CD8-positive, alpha-beta T cell (primary cell): ENCODE measurements at regions of chr6 and their contacts with region 1.

Region 1: DNA sequence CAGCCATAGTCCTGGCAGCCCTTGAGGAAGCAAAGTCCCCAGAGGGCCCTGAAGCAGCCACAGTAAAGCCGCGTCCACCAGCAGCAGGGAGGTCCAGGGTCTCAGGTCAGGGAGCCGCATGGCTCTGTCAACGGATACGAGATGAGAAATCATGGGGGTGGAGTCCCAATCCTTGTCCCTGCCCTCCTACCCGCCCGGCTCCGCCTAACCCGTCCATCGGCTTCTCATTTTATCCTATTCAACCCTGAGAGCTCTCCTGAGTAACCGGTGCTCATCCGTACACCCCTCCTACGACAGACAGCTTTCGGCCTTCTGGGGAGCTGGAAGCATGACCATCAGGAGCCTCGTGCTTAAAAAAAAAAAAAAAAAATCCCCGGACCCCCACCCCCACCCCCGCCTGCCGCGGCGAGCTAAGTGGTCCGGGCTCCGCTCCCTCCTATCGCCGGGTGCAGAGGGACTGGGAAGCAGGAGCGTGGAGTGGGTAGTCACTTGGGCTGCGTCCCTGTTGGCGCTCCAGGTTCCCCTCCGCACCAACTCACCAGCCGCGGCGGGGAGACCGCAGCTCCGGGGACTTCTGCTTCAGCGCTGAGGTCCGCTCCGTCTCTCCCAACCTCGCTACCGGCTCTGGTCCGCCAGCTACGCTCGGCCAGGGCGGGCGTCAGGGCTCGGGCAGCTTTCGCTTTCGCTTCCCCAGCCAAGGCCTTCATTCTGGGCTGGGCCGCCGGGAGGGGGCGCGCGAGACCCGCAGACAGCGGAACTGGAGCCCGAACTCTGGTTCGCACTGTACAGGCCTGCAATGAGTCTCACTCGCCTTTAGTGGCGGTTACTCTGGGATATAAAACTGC is at the start of gene TAP2:
- DNase-seq: peak; percentile 96 to 99 (median 97)
- ATAC-seq: peak; percentile 90
- H3K4me3 ChIP-seq: peak within 1 kb of the TSS; percentile 64 to 83
- H3K4me3 Mint-ChIP-seq: peak within 1 kb of the TSS; percentile 93
- H3K27ac ChIP-seq: peak within 1 kb of the TSS; percentile 88 to 100
- H3K27ac Mint-ChIP-seq: peak within 1 kb of the TSS; percentile 98
- H3K4me1 ChIP-seq: peaks cover 60% of the 10 kb centered on the region
- H3K4me1 Mint-ChIP-seq: peaks cover 89% of the 10 kb centered on the region
- H3K27me3 ChIP-seq: no peaks in the 10 kb centered on the region
- H3K27me3 Mint-ChIP-seq: no peaks in the 10 kb centered on the region
- CTCF ChIP-seq: peak; percentile 99
- total RNA-seq, gene TAP2: 88.9 to 91.0 TPM

Region 2: DNA sequence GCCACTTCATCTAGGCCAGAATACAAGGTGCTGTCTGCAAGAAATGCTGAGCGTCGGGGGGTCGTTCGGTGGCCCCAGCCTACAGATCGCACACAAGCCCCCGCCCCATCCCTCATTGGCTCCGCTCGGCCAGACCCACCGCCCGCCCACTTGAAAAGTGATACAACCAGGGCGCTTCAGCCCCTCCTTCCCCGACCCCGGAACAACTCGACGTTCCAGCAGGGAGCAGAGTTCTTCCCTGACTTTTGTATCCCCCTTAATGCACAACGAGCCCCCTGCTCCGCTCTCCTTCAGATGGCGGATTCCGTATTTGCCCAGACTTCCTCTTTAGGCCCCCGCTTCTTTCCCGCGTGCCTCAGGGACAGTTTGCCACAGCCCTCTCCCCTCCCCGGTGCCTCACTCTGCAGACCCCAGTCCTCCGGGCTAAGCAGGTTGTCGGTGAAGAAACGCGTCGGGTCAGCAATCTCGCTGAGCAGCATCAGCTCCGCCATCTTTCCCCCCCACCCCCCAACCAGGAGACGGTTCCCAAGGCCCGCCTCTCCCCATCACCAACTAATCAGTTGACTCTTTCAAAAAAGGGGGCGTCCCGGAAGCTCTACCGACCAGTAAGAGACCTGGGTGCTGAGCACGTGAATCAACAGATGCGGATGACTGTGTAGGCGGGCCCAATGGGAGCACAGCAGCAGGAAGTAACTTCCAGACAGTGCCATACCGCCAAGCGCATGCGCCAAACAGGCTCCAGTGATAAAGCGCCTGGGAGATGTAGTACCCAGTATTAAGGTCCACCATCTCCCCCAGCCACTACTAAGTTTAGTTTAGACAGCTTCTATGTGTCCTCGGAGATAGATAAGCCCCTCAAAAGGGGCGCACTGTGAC is 710.4 kb before region 1 on chr6 and contains the start of gene ATF6B:
- CTCF ChIA-PET with region 1: no interaction called
- POLR2A ChIA-PET with region 1: no interaction called
- intact Hi-C with region 1: loop called in 1 of 2 experiments (anchors 10 kb)
- DNase-seq: peak; percentile 90 to 100 (median 95)
- ATAC-seq: peak; percentile 94
- H3K4me3 ChIP-seq: peak within 1 kb of the TSS; percentile 81 to 88
- H3K4me3 Mint-ChIP-seq: peak within 1 kb of the TSS; percentile 99
- H3K27ac ChIP-seq: peak within 1 kb of the TSS; percentile 76 to 83
- H3K27ac Mint-ChIP-seq: peak within 1 kb of the TSS; percentile 97
- H3K4me1 ChIP-seq: peaks cover 31% of the 10 kb centered on the region
- H3K4me1 Mint-ChIP-seq: peaks cover 47% of the 10 kb centered on the region
- H3K27me3 ChIP-seq: no peaks in the 10 kb centered on the region
- H3K27me3 Mint-ChIP-seq: no peaks in the 10 kb centered on the region
- CTCF ChIP-seq: no peak
- total RNA-seq, gene ATF6B: 69.3 to 72.5 TPM

Region 3: GRCh38 chr6:32700391-32701040 is 137.8 kb before region 1 on chr6:
- CTCF ChIA-PET with region 1: no interaction called
- POLR2A ChIA-PET with region 1: no interaction called
- intact Hi-C with region 1: no loop called
- DNase-seq: peak in 6 of 9 experiments; percentile 2 to 71 (median 46)
- ATAC-seq: peak; percentile 49
- H3K4me3 ChIP-seq: no peak overlapping the region
- H3K4me3 Mint-ChIP-seq: no peak overlapping the region
- H3K27ac ChIP-seq: no peak overlapping the region
- H3K27ac Mint-ChIP-seq: no peak overlapping the region
- H3K4me1 ChIP-seq: no peaks in the 10 kb centered on the region
- H3K4me1 Mint-ChIP-seq: peaks cover 4% of the 10 kb centered on the region
- H3K27me3 ChIP-seq: no peaks in the 10 kb centered on the region
- H3K27me3 Mint-ChIP-seq: peaks cover 40% of the 10 kb centered on the region
- CTCF ChIP-seq: peak; percentile 86

Region 4: GRCh38 chr6:32819729-32820128 is 18.6 kb before region 1 on chr6:
- CTCF ChIA-PET with region 1: interaction called, 60 read pairs
- POLR2A ChIA-PET with region 1: no interaction called
- intact Hi-C with region 1: no loop called
- DNase-seq: no peak
- ATAC-seq: no peak
- H3K4me3 ChIP-seq: no peak overlapping the region
- H3K4me3 Mint-ChIP-seq: no peak overlapping the region
- H3K27ac ChIP-seq: no peak overlapping the region
- H3K27ac Mint-ChIP-seq: no peak overlapping the region
- H3K4me1 ChIP-seq: no peaks in the 10 kb centered on the region
- H3K4me1 Mint-ChIP-seq: no peaks in the 10 kb centered on the region
- H3K27me3 ChIP-seq: no peaks in the 10 kb centered on the region
- H3K27me3 Mint-ChIP-seq: no peaks in the 10 kb centered on the region
- CTCF ChIP-seq: no peak

Region 5: GRCh38 chr6:32853541-32854375 is 15.4 kb after region 1 on chr6 and contains the starts of genes PSMB9 and TAP1:
- CTCF ChIA-PET with region 1: interaction called, 299 read pairs
- POLR2A ChIA-PET with region 1: interaction called, 182 read pairs
- intact Hi-C with region 1: loop called (anchors 1 kb)
- DNase-seq: peak; percentile 83 to 99 (median 94)
- ATAC-seq: peak; percentile 78
- H3K4me3 ChIP-seq: peak within 1 kb of the TSS; percentile 85 to 99
- H3K4me3 Mint-ChIP-seq: peak within 1 kb of the TSS; percentile 99
- H3K27ac ChIP-seq: peak within 1 kb of the TSS; percentile 98
- H3K27ac Mint-ChIP-seq: peak within 1 kb of the TSS; percentile 100
- H3K4me1 ChIP-seq: peaks cover 62% of the 10 kb centered on the region
- H3K4me1 Mint-ChIP-seq: peaks cover 69% of the 10 kb centered on the region
- H3K27me3 ChIP-seq: no peaks in the 10 kb centered on the region
- H3K27me3 Mint-ChIP-seq: no peaks in the 10 kb centered on the region
- CTCF ChIP-seq: peak; percentile 89
- total RNA-seq, gene PSMB9: 32.9 to 34.7 TPM
- total RNA-seq, gene TAP1: 98.0 to 98.1 TPM

Region 6: DNA sequence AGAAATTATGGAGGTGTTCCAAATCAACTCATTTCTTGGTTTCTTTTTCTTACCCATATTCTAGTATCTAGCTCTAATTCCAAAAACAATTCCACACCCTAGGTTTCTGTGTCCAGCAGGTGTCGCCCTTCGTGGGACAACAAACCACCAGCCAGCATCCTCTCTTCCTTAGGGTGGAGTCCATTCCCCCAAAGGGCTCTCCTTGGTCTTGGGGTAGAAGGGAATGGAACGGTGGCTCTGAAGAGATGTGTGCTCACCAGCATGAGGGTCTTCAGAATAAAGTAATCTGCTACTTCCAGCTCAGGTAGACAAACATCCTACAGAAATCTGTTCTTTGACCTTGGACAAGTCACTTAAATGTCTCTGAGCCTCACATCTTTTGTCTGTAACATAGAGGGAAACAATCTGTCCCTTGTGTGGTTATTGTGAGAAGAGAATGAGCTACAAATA is 95.3 kb after region 1 on chr6:
- CTCF ChIA-PET with region 1: interaction called, 17 read pairs
- POLR2A ChIA-PET with region 1: interaction called, 4 read pairs
- intact Hi-C with region 1: no loop called
- DNase-seq: peak; percentile 50 to 87 (median 81)
- ATAC-seq: peak; percentile 61
- H3K4me3 ChIP-seq: no peak overlapping the region
- H3K4me3 Mint-ChIP-seq: no peak overlapping the region
- H3K27ac ChIP-seq: no peak overlapping the region
- H3K27ac Mint-ChIP-seq: no peak overlapping the region
- H3K4me1 ChIP-seq: no peaks in the 10 kb centered on the region
- H3K4me1 Mint-ChIP-seq: peaks cover 5% of the 10 kb centered on the region
- H3K27me3 ChIP-seq: no peaks in the 10 kb centered on the region
- H3K27me3 Mint-ChIP-seq: no peaks in the 10 kb centered on the region
- CTCF ChIP-seq: peak; percentile 72

Region 7: GRCh38 chr6:32952817-32953739 is 114.7 kb after region 1 on chr6 and contains the start of gene HLA-DMA:
- CTCF ChIA-PET with region 1: interaction called, 24 read pairs
- POLR2A ChIA-PET with region 1: interaction called, 4 read pairs
- intact Hi-C with region 1: loop called in 1 of 2 experiments (anchors 5 kb)
- DNase-seq: peak; percentile 55 to 92 (median 77)
- ATAC-seq: peak; percentile 98
- H3K4me3 ChIP-seq: peak within 1 kb of the TSS; percentile 49 to 52
- H3K4me3 Mint-ChIP-seq: peak within 1 kb of the TSS; percentile 85
- H3K27ac ChIP-seq: peak within 1 kb of the TSS; percentile 28 to 66
- H3K27ac Mint-ChIP-seq: peak within 1 kb of the TSS; percentile 93
- H3K4me1 ChIP-seq: peaks cover 29% of the 10 kb centered on the region
- H3K4me1 Mint-ChIP-seq: peaks cover 55% of the 10 kb centered on the region
- H3K27me3 ChIP-seq: no peaks in the 10 kb centered on the region
- H3K27me3 Mint-ChIP-seq: no peaks in the 10 kb centered on the region
- CTCF ChIP-seq: peak; percentile 86
- total RNA-seq, gene HLA-DMA: 25.9 to 32.3 TPM